ENCODE measurements at regions of chr14 and their contacts with region 1.

Region 1: DNA sequence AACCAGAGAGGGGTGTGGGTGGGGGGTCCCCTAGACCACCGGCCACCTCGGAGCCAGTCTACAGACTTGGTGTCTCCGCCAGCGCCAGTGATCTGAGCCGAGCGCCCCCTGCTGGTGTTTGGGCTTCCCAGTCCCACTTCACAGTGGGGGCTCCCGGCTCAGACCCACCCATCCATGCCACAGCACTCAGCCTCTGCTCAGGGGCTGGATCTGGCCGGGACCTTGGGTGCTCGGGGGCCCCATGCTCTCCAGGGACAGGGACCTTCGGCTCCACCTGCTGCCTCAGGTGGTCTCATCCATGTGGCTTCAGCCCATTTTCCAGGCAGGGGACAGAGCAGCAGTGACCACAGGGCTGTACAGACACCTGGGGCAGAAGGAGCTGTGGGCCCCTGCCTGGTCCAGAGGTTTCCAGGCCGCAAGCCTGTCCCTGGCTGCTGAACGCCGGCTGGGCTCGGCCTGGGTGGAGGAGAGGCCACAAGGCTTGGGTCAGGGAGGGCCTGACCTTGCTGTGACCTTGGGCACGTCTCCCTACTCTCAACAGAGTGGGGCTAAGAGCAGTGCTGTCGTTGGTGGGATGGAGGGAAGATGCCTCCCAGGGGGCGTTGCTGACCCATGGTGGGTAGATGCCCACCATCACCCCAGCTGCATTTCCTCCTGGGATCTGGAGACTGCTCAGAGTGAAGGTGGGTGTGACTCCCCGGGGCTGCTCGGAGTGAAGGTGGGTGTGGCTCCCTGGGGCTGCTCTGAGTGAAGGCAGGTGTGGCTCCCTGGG is 86.3 kb downstream of the KIF26A start:
- DNase-seq: peak; percentile 67
- H3K4me3 ChIP-seq: peak overlapping the region in 1 of 2 experiments; percentile 24; a peak in 1 of 4 replicates
- H3K27ac ChIP-seq: peak overlapping the region in 1 of 2 experiments; percentile 100; a peak in 2 of 4 replicates
- H3K4me1 ChIP-seq: peaks cover 0 to 66% of the 10 kb centered on the region in 2 experiments; a peak in 2 of 4 replicates
- H3K27me3 ChIP-seq: no peaks in the 10 kb centered on the region
- CTCF ChIP-seq: peak; percentile 55
- EP300 ChIP-seq: no peak
- RAD21 ChIP-seq: no peak; the same call in 1 of the 2 replicates

Region 2: DNA sequence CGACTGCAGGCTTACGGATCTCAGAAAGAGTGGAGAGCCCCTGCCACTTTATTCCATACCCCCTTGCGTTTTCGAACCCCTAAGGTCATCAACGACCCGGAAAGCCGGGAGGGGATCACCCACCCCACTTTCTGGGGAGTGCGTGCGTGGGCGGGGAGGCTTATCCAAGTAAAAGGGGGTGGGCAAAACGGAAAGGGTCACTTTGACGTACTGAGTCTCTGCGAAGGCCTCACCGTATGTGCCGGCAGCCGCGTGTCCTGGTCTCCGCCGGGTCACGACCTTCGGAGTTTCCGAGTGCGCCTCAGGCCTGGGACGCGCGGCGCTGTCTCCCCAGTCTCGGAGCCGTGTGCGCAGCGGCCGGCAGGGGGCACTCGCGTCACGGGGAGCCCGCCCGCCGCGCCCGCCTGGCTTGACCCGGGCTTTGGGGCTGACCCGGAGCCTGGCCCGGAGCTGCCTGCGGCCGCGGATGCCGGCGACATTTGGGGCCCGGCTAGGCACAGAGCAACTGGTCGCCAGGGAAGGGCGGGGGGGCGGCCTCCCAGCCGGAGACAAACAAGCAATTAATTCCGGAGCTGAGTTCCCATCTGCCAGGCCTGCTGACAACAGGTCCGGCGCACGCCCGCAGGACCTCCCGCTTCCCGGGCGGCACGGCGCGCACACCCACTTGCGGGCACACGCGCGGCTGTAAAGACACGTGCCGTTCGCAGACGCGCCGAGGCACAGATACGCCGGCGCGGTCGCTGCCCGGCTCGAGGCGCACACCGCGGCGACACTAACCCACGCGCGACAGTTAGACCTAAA is 87.2 kb before region 1 on chr14:
- CTCF ChIA-PET with region 1: interaction called, 18 read pairs
- POLR2A ChIA-PET with region 1: interaction called, 4 read pairs
- DNase-seq: peak; percentile 92
- H3K4me3 ChIP-seq: peak overlapping the region; percentile 51 to 70
- H3K27ac ChIP-seq: peak overlapping the region in 1 of 2 experiments; percentile 90; a peak in 2 of 4 replicates
- H3K4me1 ChIP-seq: peaks cover 0 to 56% of the 10 kb centered on the region in 2 experiments; a peak in 1 of 4 replicates
- H3K27me3 ChIP-seq: peaks cover 17% of the 10 kb centered on the region
- CTCF ChIP-seq: peak; percentile 75
- EP300 ChIP-seq: peak in 1 of 2 experiments; percentile 44; a peak in 1 of 4 replicates
- RAD21 ChIP-seq: peak; percentile 86

Region 3: DNA sequence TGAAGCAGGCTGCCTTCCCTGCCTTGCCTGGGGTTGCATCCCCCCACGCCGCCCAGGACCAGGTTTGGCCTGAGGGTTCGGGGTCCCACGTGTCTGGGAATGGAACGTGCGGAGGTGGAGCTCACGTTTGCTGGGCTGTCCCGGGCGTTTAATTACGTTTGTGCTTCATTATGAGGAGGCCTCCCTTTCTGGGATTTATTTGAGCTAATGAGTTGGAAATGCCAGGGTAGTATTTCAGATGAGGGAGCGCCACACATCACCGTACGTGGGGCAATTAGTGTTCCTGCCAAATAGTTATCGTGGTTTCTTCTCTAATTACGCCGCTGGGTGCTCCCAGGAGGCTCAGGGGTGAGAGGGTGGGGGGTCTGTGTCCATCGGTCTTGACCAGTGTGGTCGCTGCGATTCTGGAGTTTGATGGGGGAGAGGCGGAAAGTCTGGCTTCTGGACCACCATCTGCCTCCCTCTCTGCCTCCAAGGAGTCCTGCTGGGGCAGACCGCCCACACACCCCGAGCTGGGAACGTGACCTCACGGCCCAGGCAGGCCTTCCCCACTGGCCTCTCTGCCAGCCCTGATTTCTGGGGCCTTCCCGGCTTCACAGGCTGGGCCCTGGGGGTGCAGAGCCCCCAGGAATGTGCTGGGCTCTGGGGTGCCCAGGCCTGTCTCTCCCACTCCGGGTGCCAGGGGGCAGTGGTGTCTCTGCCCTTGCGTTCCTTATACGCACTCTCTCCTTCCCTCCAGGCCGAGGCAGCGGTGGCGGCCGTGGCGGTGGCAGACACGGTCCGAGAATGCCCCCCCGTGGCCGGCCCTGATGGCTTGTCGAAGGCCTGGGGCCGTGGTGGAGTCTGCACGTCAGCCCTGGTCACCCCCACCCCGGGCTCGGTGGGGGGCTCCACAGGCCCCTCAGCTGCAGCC is 67.4 kb before region 1 on chr14:
- CTCF ChIA-PET with region 1: interaction called, 48 read pairs
- POLR2A ChIA-PET with region 1: interaction called, 8 read pairs
- DNase-seq: peak; percentile 81
- H3K4me3 ChIP-seq: no peak overlapping the region
- H3K27ac ChIP-seq: peak overlapping the region in 1 of 2 experiments; percentile 96; a peak in 2 of 4 replicates
- H3K4me1 ChIP-seq: peaks cover 0 to 92% of the 10 kb centered on the region in 2 experiments; a peak in 1 of 4 replicates
- H3K27me3 ChIP-seq: no peaks in the 10 kb centered on the region
- CTCF ChIP-seq: peak; percentile 16
- EP300 ChIP-seq: no peak
- RAD21 ChIP-seq: peak; percentile 50

Region 4: DNA sequence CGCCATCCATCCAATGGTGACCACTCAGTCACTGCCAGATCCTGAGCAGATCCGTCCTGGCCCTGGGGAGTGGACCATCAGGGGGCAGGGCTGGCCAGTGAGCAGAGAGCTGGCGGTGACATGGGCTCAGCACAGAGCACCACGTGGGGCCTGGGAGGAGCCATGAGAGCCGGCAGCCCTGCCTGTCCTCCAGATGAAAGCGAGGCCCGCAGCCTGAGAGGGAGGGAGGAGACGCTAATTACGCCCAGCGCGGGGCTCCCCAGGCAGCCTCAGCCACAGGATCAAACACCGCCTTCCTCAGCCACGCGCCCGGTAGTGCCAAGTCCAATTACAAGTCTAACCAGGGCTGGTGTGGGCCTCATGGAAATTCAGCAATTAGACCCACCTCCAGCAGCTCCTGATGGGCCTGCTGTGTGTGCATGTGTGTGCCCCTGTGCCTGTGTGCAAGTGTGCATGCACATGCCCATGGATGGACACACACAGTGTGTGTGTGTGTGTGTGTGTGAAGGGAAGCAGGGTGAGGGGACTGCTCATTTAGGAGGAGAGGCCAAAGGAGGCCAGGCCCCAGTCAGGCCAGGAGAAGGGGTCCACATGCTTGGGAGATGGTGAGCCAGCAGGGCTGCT is 18.3 kb before region 1 on chr14:
- CTCF ChIA-PET with region 1: interaction called, 19 read pairs
- POLR2A ChIA-PET with region 1: interaction called, 23 read pairs
- DNase-seq: peak; percentile 71
- H3K4me3 ChIP-seq: no peak overlapping the region
- H3K27ac ChIP-seq: peak overlapping the region in 1 of 2 experiments; percentile 85; a peak in 2 of 4 replicates
- H3K4me1 ChIP-seq: peaks cover 0 to 54% of the 10 kb centered on the region in 2 experiments; a peak in 2 of 4 replicates
- H3K27me3 ChIP-seq: no peaks in the 10 kb centered on the region
- CTCF ChIP-seq: no peak
- EP300 ChIP-seq: no peak
- RAD21 ChIP-seq: 0 out of 2 replicates have a peak, but pooled peaks have one; percentile 15

Region 5: GRCh38 chr14:104293851-104294627 is 69.3 kb after region 1 on chr14:
- CTCF ChIA-PET with region 1: interaction called, 47 read pairs
- POLR2A ChIA-PET with region 1: interaction called, 8 read pairs
- DNase-seq: no peak
- H3K4me3 ChIP-seq: no peak overlapping the region
- H3K27ac ChIP-seq: peak overlapping the region in 1 of 2 experiments; percentile 94; a peak in 1 of 4 replicates
- H3K4me1 ChIP-seq: peaks cover 3 to 87% of the 10 kb centered on the region in 2 experiments; a peak in 2 of 4 replicates
- H3K27me3 ChIP-seq: no peaks in the 10 kb centered on the region
- CTCF ChIP-seq: peak; percentile 21; the same call in 1 of the 2 replicates
- EP300 ChIP-seq: no peak
- RAD21 ChIP-seq: peak; percentile 48

Region 6: GRCh38 chr14:104399432-104400151 is 174.9 kb after region 1 on chr14:
- CTCF ChIA-PET with region 1: interaction called, 11 read pairs
- POLR2A ChIA-PET with region 1: no interaction called
- DNase-seq: peak; percentile 84
- H3K4me3 ChIP-seq: no peak overlapping the region
- H3K27ac ChIP-seq: peak overlapping the region in 1 of 2 experiments; percentile 82; a peak in 2 of 4 replicates
- H3K4me1 ChIP-seq: peaks cover 0 to 17% of the 10 kb centered on the region in 2 experiments; a peak in 1 of 4 replicates
- H3K27me3 ChIP-seq: no peaks in the 10 kb centered on the region
- CTCF ChIP-seq: no peak
- EP300 ChIP-seq: peak in 1 of 2 experiments; percentile 76; a peak in 2 of 4 replicates
- RAD21 ChIP-seq: peak; percentile 83

Region 7: GRCh38 chr14:104545151-104545941 is 320.7 kb after region 1 on chr14:
- CTCF ChIA-PET with region 1: no interaction called
- POLR2A ChIA-PET with region 1: no interaction called
- DNase-seq: no peak
- H3K4me3 ChIP-seq: no peak overlapping the region
- H3K27ac ChIP-seq: no peak overlapping the region
- H3K4me1 ChIP-seq: no peaks in the 10 kb centered on the region; a peak in 2 of 4 replicates
- H3K27me3 ChIP-seq: no peaks in the 10 kb centered on the region
- CTCF ChIP-seq: no peak
- EP300 ChIP-seq: no peak
- RAD21 ChIP-seq: no peak